ENCODE measurements at regions of chr12 and their contacts with region 1.

Region 1: GRCh38 chr12:120265473-120266179 is at the start of gene PXN:
- DNase-seq: peak; percentile 76 to 87
- ATAC-seq: peak; percentile 82 to 87
- H3K4me3 ChIP-seq: peak within 1 kb of the TSS; percentile 99
- H3K27ac ChIP-seq: peak within 1 kb of the TSS; percentile 99
- H3K4me1 ChIP-seq: peaks cover 42% of the 10 kb centered on the region
- CTCF ChIP-seq: peak; percentile 90
- EP300 ChIP-seq: no peak
- POLR2A ChIP-seq: peak; percentile 67
- RAD21 ChIP-seq: peak; percentile 92 to 98
- polyA plus RNA-seq, gene PXN: 40.1 and 62.8 TPM in 2 replicates

Region 2: DNA sequence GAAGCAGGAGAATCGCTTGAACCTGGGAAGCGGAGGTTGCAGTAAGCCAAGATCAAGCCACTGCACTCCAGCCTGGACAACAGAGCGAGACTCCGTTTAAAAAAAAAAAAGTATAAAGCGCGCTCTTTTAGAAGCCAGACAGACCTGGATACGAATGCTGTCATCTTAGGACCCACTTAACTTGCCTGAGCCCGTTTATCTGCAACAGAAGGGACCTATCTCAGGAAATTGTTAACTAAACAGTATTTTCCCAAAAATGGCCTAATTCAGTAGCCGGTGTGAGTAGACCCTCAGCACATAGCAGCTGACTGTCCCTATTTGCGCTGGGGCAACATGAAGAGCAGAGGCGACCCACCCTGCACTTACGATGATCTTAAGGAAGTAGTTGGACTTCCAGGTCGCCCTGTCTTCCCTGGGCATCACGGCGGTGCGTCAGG is 65.2 kb before region 1 on chr12:
- CTCF ChIA-PET with region 1: interaction called, 24 read pairs
- POLR2A ChIA-PET with region 1: interaction called, 45 read pairs
- DNase-seq: no peak
- ATAC-seq: no peak; a peak in 1 of 6 replicates
- H3K4me3 ChIP-seq: peak overlapping the region; percentile 93
- H3K27ac ChIP-seq: peak overlapping the region; percentile 92
- H3K4me1 ChIP-seq: peaks cover 38% of the 10 kb centered on the region
- CTCF ChIP-seq: no peak
- EP300 ChIP-seq: no peak
- POLR2A ChIP-seq: no peak
- RAD21 ChIP-seq: no peak

Region 3: DNA sequence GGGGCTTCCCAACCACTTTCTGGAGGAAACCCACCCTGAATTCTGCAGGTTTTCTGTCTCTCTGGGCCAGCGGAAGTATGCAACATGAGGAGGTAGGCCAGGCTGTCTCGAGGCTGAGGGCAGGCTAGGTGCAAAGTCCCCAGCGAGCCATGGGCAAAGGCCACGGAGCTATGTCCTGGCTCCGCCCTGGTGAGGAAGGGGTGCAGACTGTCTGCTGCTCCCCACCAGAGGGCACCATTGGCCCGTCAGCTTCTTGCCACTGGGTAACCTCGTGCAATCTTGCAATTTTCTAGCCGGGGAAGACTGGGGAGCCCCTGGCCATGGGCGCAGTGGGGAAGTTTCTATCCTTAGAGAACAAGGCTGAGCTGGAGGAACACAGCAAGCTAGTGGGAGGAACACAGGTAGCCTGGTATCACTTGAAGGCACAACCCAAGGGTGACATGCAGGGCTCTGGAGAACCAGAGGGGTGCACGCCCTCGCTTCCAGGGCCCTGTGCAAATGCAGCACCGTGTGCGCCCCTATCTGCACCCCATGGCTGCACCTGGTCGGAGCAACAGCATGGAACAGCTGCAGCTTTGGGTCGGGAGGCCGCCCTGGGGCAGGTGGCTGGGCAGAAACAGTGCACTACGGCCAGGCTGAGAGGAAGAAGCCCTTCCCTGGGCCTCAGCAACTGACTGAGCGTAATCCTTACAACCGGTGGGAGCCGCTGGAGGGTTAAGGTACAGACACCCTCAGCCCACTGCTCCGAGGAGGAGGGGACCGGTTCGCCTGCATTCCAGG is 37.1 kb before region 1 on chr12:
- CTCF ChIA-PET with region 1: interaction called, 1,367 read pairs
- POLR2A ChIA-PET with region 1: interaction called, 62 read pairs
- DNase-seq: peak; percentile 88 to 92
- ATAC-seq: peak; percentile 31 to 72
- H3K4me3 ChIP-seq: no peak overlapping the region
- H3K27ac ChIP-seq: peak overlapping the region; percentile 93 to 100
- H3K4me1 ChIP-seq: peaks cover 90% of the 10 kb centered on the region
- CTCF ChIP-seq: peak; percentile 97
- EP300 ChIP-seq: no peak
- POLR2A ChIP-seq: no peak
- RAD21 ChIP-seq: peak; percentile 99 to 100

Region 4: GRCh38 chr12:120234643-120235368 is 30.8 kb before region 1 on chr12:
- CTCF ChIA-PET with region 1: interaction called, 1,367 read pairs
- POLR2A ChIA-PET with region 1: interaction called, 62 read pairs
- DNase-seq: peak; percentile 94 to 96
- ATAC-seq: peak; percentile 58 to 64
- H3K4me3 ChIP-seq: 0 out of 3 replicates have a peak overlapping the region, but pooled peaks have one; percentile 0
- H3K27ac ChIP-seq: peak overlapping the region; percentile 93 to 100
- H3K4me1 ChIP-seq: peaks cover 98% of the 10 kb centered on the region
- CTCF ChIP-seq: peak; percentile 39; the same call in 2 of the 3 replicates
- EP300 ChIP-seq: 0 out of 5 replicates have a peak, but pooled peaks of 1 of the 2 experiments have one; percentile 16
- POLR2A ChIP-seq: no peak
- RAD21 ChIP-seq: peak; percentile 54 to 56; a peak in 4 of 5 replicates

Region 5: DNA sequence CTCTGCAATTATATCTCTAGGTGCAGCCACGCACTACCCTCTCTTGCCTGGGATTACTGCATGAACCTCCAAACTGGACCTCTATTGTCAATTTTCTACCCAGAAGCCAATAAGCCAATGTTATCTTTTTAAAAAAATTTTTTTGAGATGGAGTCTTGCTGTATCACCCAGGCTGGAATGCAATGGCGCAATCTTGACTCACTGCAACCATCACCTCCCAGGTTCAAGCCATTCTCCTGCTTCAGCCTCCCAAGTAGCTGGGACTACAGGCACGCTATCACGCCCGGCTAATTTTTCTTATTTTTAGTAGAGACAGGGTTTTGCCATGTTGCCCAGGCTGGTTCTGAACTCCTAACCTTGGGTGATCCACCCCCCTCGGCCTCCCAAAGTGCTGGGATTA is 11.1 kb after region 1 on chr12:
- CTCF ChIA-PET with region 1: interaction called, 39 read pairs
- POLR2A ChIA-PET with region 1: no interaction called
- DNase-seq: peak in 1 of 2 experiments; percentile 58
- ATAC-seq: peak in 1 of 2 experiments; percentile 52; a peak in 3 of 6 replicates
- H3K4me3 ChIP-seq: no peak overlapping the region
- H3K27ac ChIP-seq: peak overlapping the region; percentile 58 to 82
- H3K4me1 ChIP-seq: peaks cover 23% of the 10 kb centered on the region
- CTCF ChIP-seq: no peak
- EP300 ChIP-seq: no peak
- POLR2A ChIP-seq: no peak
- RAD21 ChIP-seq: no peak

Region 6: GRCh38 chr12:120286796-120287465 is 21.3 kb after region 1 on chr12:
- CTCF ChIA-PET with region 1: interaction called, 39 read pairs
- POLR2A ChIA-PET with region 1: interaction called, 32 read pairs
- DNase-seq: no peak
- ATAC-seq: no peak
- H3K4me3 ChIP-seq: no peak overlapping the region
- H3K27ac ChIP-seq: 0 out of 6 replicates have a peak overlapping the region, but pooled peaks of 1 of the 2 experiments have one; percentile 4
- H3K4me1 ChIP-seq: peaks cover 8% of the 10 kb centered on the region; the same call in 1 of the 3 replicates
- CTCF ChIP-seq: no peak
- EP300 ChIP-seq: no peak
- POLR2A ChIP-seq: no peak
- RAD21 ChIP-seq: no peak

Region 7: GRCh38 chr12:120748242-120748641 is 482.6 kb after region 1 on chr12:
- CTCF ChIA-PET with region 1: no interaction called
- POLR2A ChIA-PET with region 1: no interaction called
- DNase-seq: no peak
- ATAC-seq: peak in 1 of 2 experiments; percentile 17; a peak in 2 of 6 replicates
- H3K4me3 ChIP-seq: no peak overlapping the region
- H3K27ac ChIP-seq: no peak overlapping the region
- H3K4me1 ChIP-seq: no peaks in the 10 kb centered on the region
- CTCF ChIP-seq: no peak
- EP300 ChIP-seq: no peak
- POLR2A ChIP-seq: no peak
- RAD21 ChIP-seq: no peak

Measured in A549 (cell line).